Heart right ventricle (tissue), 16 donors: ENCODE measurements at regions of chr7 and their contacts with region 1.

Region 1: DNA sequence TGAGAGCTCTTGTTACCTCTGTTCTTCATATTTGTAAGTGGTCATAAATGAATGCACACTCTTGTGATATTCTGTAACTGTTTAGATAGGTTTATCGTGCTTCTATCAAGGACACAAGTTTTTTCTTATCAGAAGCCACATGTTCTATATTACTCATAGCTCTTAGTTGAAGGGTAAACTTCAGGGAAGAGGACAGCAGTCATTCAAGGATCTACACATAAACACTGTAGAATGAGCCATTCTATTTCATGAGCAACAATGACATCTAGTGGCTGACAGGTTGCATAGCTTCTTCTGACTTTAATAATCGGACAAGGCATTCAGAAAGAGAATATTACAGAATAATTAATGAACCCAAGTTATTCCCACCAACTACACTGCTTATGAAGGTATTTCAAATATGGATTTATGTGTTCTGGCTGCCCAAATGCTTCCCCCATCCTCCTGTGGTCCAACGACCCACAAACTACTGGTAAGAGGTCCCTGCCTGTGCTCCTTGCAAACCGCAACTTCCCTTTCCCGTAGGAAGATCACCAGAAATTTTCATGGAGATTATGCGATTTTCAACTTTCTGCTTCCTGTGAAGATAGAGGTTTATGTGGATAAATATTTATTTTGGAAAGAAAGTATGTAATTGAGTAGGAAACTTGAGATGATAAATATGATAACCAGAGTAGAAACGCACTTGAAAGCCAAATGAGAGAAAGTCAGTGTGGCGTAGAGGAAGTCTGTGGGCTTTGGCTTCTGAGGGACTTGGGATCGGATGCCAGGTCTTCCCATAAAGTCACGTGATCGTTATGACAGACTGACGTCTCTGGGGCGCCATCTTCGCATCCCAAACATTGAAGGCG is 16.8 kb upstream of the ABCB5 start:
- DNase-seq: no peak
- ATAC-seq: peak in 7 of 8 donors; percentile 49 to 80 (median 74)
- H3K4me3 ChIP-seq: peak overlapping the region in 2 of 10 donors; percentile 26 to 34
- H3K27ac ChIP-seq: no peak overlapping the region
- H3K4me1 ChIP-seq: peaks cover 0 to 7% (median 0%) of the 10 kb centered on the region in 9 donors
- H3K27me3 ChIP-seq: peaks cover 0 to 25% (median 0%) of the 10 kb centered on the region in 7 donors
- CTCF ChIP-seq: peak; percentile 34 to 85 (median 80)

Region 2: GRCh38 chr7:19708397-19709248 is 890.1 kb before region 1 on chr7 and contains the start of gene POLR1F:
- intact Hi-C with region 1: loop called in 9 of 10 experiments (anchors 1 to 10 kb)
- DNase-seq: peak; percentile 92 to 95
- ATAC-seq: peak; percentile 99 to 100 (median 100)
- H3K4me3 ChIP-seq: peak within 1 kb of the TSS; percentile 65 to 95 (median 86)
- H3K27ac ChIP-seq: peak within 1 kb of the TSS in 9 of 10 donors; percentile 33 to 83 (median 68)
- H3K4me1 ChIP-seq: peaks cover 5 to 29% (median 18%) of the 10 kb centered on the region in 9 donors
- H3K27me3 ChIP-seq: no peaks in the 10 kb centered on the region
- CTCF ChIP-seq: peak; percentile 78 to 98 (median 90)
- total RNA-seq, gene POLR1F: 6.9 to 10.9 (median 8.7) TPM

Region 3: GRCh38 chr7:19747740-19748339 is 850.8 kb before region 1 on chr7:
- intact Hi-C with region 1: loop called in 7 of 10 experiments (anchors 5 to 10 kb)
- DNase-seq: no peak
- ATAC-seq: no peak
- H3K4me3 ChIP-seq: no peak overlapping the region
- H3K27ac ChIP-seq: no peak overlapping the region
- H3K4me1 ChIP-seq: no peaks in the 10 kb centered on the region
- H3K27me3 ChIP-seq: peaks cover 0 to 9% (median 0%) of the 10 kb centered on the region in 7 donors
- CTCF ChIP-seq: peak; percentile 21 to 61 (median 54)

Region 4: GRCh38 chr7:20158684-20159083 is 440.0 kb before region 1 on chr7:
- intact Hi-C with region 1: loop called in 9 of 10 experiments (anchors 2 to 10 kb)
- DNase-seq: no peak
- ATAC-seq: peak in 7 of 8 donors; percentile 49 to 82 (median 71)
- H3K4me3 ChIP-seq: no peak overlapping the region
- H3K27ac ChIP-seq: no peak overlapping the region
- H3K4me1 ChIP-seq: no peaks in the 10 kb centered on the region
- H3K27me3 ChIP-seq: peaks cover 0 to 4% (median 0%) of the 10 kb centered on the region in 7 donors
- CTCF ChIP-seq: peak in 8 of 9 donors; percentile 15 to 62 (median 54)

Region 5: GRCh38 chr7:20310963-20311742 is 287.5 kb before region 1 on chr7:
- intact Hi-C with region 1: loop called in 1 of 10 experiments (anchors 10 kb)
- DNase-seq: no peak
- ATAC-seq: no peak
- H3K4me3 ChIP-seq: no peak overlapping the region
- H3K27ac ChIP-seq: no peak overlapping the region
- H3K4me1 ChIP-seq: peaks cover 0 to 5% (median 0%) of the 10 kb centered on the region in 9 donors
- H3K27me3 ChIP-seq: no peaks in the 10 kb centered on the region
- CTCF ChIP-seq: peak in 8 of 9 donors; percentile 17 to 50 (median 34)